ENCODE measurements at regions of chr7 and their contacts with region 1.

Region 1: GRCh38 chr7:134113655-134114054 is 13.5 kb upstream of the LRGUK start:
- DNase-seq: no peak
- H3K4me3 ChIP-seq: no peak overlapping the region
- H3K27ac ChIP-seq: no peak overlapping the region
- H3K4me1 ChIP-seq: no peaks in the 10 kb centered on the region
- H3K27me3 ChIP-seq: no peaks in the 10 kb centered on the region
- CTCF ChIP-seq: no peak

Region 2: GRCh38 chr7:134098072-134098471 is 15.6 kb before region 1 on chr7:
- intact Hi-C with region 1: loop called (anchors 2 kb)
- DNase-seq: no peak
- H3K4me3 ChIP-seq: no peak overlapping the region
- H3K27ac ChIP-seq: no peak overlapping the region
- H3K4me1 ChIP-seq: no peaks in the 10 kb centered on the region
- H3K27me3 ChIP-seq: no peaks in the 10 kb centered on the region
- CTCF ChIP-seq: no peak

Region 3: DNA sequence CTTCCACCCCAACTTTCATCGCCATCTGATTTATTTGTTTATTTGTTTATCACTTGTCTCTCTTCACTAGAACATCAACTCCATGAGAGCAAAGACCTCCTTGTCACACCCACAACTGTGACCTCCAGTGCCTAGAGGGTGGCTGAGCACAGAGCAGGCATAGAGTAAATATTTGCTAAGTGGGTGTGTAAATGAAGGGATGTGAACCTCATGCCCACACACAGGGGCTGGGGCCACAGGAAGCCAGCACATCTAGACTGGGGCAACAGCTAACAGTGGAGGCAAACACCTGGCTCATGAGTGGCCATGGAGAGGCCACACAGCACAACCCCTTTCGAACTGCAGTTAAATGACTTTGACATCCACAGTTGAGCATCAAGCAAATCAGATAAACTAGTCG is 305.4 kb after region 1 on chr7:
- intact Hi-C with region 1: no loop called
- DNase-seq: no peak
- H3K4me3 ChIP-seq: no peak overlapping the region
- H3K27ac ChIP-seq: no peak overlapping the region
- H3K4me1 ChIP-seq: no peaks in the 10 kb centered on the region
- H3K27me3 ChIP-seq: no peaks in the 10 kb centered on the region
- CTCF ChIP-seq: no peak

Measured in ascending aorta (tissue), 2 donors.